ENCODE measurements at regions of chr11 and their contacts with region 1.

Region 1: GRCh38 chr11:35822815-35823495 is 120.9 kb upstream of the LDLRAD3 start:
- DNase-seq: peak; percentile 11
- ATAC-seq: no peak
- H3K4me3 ChIP-seq: no peak overlapping the region
- H3K27ac ChIP-seq: no peak overlapping the region
- H3K4me1 ChIP-seq: peaks cover 12% of the 10 kb centered on the region
- H3K27me3 ChIP-seq: no peaks in the 10 kb centered on the region
- CTCF ChIP-seq: no peak

Region 2: DNA sequence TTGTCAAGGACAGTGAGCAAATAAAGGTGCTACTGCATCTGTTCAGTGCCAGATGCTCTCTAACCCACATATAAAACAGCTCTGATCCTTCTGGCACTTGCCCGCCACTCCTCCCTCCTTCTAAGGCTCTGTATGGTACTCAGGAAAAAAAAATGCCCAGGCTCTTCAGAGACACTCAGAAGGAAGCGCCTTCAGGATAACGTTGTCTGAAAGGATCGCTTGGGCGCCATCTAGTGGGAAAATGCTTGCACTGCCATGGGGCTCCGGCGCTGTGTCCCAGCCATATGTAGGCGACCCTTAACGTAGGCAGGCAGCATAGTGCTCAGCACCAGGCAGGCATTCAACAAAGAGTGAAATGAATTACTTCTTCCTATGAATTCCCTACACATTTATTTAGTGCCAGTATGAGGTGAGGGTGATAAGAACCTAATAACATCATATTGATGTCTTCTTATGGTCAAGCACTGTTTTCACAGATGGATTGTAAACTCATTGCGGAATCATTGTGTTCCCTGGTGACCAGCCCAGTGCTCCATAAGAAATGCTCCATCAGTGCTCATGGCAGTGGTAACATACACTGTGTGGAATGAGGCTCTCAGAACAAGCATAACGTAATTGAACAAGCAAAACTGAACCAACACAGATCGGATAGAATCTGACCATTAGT is 337.2 kb before region 1 on chr11:
- CTCF ChIA-PET with region 1: interaction called, 15 read pairs
- POLR2A ChIA-PET with region 1: no interaction called
- intact Hi-C with region 1: loop called (anchors 2 kb)
- DNase-seq: peak; percentile 92
- ATAC-seq: peak; percentile 80
- H3K4me3 ChIP-seq: no peak overlapping the region
- H3K27ac ChIP-seq: no peak overlapping the region
- H3K4me1 ChIP-seq: peaks cover 26% of the 10 kb centered on the region
- H3K27me3 ChIP-seq: no peaks in the 10 kb centered on the region
- CTCF ChIP-seq: peak; percentile 87

Region 3: DNA sequence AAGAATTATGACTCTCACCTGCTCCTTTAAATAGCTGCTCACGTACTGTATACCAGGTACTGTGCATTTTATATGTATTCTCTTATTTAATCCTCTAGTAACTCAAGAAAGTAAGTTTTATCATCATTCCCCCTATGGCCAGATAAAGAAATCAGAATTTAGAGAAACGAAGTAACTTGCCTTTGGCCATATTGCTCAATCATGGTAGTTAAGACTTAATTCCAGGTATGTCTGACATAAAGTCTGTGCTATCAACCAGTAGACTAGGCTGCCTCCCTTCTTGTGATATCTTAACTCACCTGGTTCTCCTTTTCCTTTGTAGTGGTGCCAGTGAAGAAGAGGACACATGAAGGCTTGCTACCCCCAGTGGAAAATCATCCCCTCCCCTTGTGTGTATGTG is 16.9 kb before region 1 on chr11:
- CTCF ChIA-PET with region 1: no interaction called
- POLR2A ChIA-PET with region 1: no interaction called
- intact Hi-C with region 1: no loop called
- DNase-seq: no peak
- ATAC-seq: no peak
- H3K4me3 ChIP-seq: no peak overlapping the region
- H3K27ac ChIP-seq: no peak overlapping the region
- H3K4me1 ChIP-seq: no peaks in the 10 kb centered on the region
- H3K27me3 ChIP-seq: no peaks in the 10 kb centered on the region
- CTCF ChIP-seq: no peak

Region 4: DNA sequence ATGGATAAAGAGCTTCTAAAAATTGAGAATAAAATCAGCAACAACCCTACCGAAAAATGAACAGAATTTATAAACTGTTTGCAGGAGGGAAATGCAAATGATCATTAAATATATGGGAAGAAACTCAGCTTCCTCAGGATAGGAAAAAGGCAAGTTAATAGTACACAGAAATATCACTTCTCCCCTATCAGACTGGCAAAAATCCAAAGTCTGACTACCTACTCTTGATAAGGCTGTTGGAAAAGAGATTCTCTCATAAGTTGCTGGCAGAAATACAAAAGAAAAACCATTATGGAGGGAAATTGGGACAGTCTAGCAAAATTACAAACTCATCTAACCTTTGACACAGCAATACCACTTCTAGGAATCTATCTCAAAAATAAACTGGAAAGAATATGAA is 20.0 kb after region 1 on chr11:
- CTCF ChIA-PET with region 1: no interaction called
- POLR2A ChIA-PET with region 1: no interaction called
- intact Hi-C with region 1: no loop called
- DNase-seq: no peak
- ATAC-seq: no peak
- H3K4me3 ChIP-seq: no peak overlapping the region
- H3K27ac ChIP-seq: no peak overlapping the region
- H3K4me1 ChIP-seq: no peaks in the 10 kb centered on the region
- H3K27me3 ChIP-seq: no peaks in the 10 kb centered on the region
- CTCF ChIP-seq: no peak

Region 5: GRCh38 chr11:35953081-35953760 is 130.3 kb after region 1 on chr11:
- CTCF ChIA-PET with region 1: interaction called, 8 read pairs
- POLR2A ChIA-PET with region 1: no interaction called
- intact Hi-C with region 1: loop called (anchors 2 kb)
- DNase-seq: peak; percentile 31
- ATAC-seq: peak; percentile 16; the same call in 1 of the 2 replicates
- H3K4me3 ChIP-seq: no peak overlapping the region
- H3K27ac ChIP-seq: peak overlapping the region; percentile 29
- H3K4me1 ChIP-seq: peaks cover 54% of the 10 kb centered on the region
- H3K27me3 ChIP-seq: no peaks in the 10 kb centered on the region
- CTCF ChIP-seq: no peak

Region 6: DNA sequence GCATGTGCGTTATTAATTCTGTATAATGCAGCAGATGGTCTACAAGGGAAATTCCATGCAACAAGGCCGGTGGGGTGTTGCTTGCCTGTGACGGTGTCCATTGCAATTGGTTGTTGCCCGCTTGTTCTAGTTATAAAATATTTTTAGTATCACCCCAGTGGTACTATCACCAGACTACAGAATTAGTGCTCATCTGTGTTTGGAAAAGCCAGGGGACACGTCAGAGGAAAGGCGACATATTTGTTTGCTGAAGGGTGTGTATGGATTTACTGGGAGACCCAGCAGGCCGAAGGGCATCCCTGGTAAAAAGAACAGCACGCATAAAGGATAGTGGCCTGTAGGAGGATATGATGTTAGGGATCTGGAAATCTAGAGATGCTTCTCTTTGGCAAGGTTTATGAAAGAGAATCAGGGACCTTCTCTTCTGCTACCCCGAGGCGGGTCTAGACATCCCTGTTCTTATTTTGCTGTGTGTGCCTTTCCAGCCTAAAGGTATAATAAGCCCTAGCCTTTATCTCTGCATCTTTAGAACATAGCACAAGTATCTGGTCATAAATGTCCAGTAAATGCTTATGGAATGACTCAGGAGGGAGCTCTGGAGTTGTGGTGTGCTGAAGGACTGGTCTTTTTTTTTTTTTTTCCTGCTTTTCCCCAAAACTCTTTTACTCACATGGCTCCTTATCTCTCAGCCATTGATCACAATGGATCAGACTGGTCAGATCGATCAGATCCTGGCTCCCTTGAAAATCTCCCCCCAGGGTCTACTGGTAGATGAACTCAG is 211.8 kb after region 1 on chr11:
- CTCF ChIA-PET with region 1: no interaction called
- POLR2A ChIA-PET with region 1: no interaction called
- intact Hi-C with region 1: loop called (anchors 10 kb)
- DNase-seq: peak; percentile 92
- ATAC-seq: peak; percentile 94
- H3K4me3 ChIP-seq: peak overlapping the region; percentile 42
- H3K27ac ChIP-seq: peak overlapping the region; percentile 93
- H3K4me1 ChIP-seq: peaks cover 43% of the 10 kb centered on the region
- H3K27me3 ChIP-seq: no peaks in the 10 kb centered on the region
- CTCF ChIP-seq: no peak

Region 7: GRCh38 chr11:36131721-36132397 is 308.9 kb after region 1 on chr11:
- CTCF ChIA-PET with region 1: interaction called, 43 read pairs
- POLR2A ChIA-PET with region 1: no interaction called
- intact Hi-C with region 1: loop called (anchors 1 kb)
- DNase-seq: peak; percentile 29
- ATAC-seq: peak; percentile 69
- H3K4me3 ChIP-seq: no peak overlapping the region
- H3K27ac ChIP-seq: no peak overlapping the region
- H3K4me1 ChIP-seq: peaks cover 11% of the 10 kb centered on the region
- H3K27me3 ChIP-seq: no peaks in the 10 kb centered on the region
- CTCF ChIP-seq: peak; percentile 68

Region 8: GRCh38 chr11:36265793-36266628 is 443.1 kb after region 1 on chr11:
- CTCF ChIA-PET with region 1: interaction called, 20 read pairs
- POLR2A ChIA-PET with region 1: no interaction called
- intact Hi-C with region 1: loop called (anchors 1 kb)
- DNase-seq: peak; percentile 70
- ATAC-seq: peak; percentile 86
- H3K4me3 ChIP-seq: no peak overlapping the region
- H3K27ac ChIP-seq: no peak overlapping the region
- H3K4me1 ChIP-seq: no peaks in the 10 kb centered on the region
- H3K27me3 ChIP-seq: no peaks in the 10 kb centered on the region
- CTCF ChIP-seq: peak; percentile 90

Measured in PC-3 (cell line).